Prostate gland (tissue), 2 donors: ENCODE measurements at regions of chr4 and their contacts with region 1.

Region 1: GRCh38 chr4:99324979-99325378 is 3.8 kb upstream of the ADH1B start:
- DNase-seq: peak; percentile 89
- H3K4me3 ChIP-seq: no peak overlapping the region
- H3K27ac ChIP-seq: peak overlapping the region; percentile 65 to 78
- H3K4me1 ChIP-seq: no peaks in the 10 kb centered on the region
- H3K27me3 ChIP-seq: no peaks in the 10 kb centered on the region
- CTCF ChIP-seq: no peak
- POLR2A ChIP-seq: no peak

Region 2: DNA sequence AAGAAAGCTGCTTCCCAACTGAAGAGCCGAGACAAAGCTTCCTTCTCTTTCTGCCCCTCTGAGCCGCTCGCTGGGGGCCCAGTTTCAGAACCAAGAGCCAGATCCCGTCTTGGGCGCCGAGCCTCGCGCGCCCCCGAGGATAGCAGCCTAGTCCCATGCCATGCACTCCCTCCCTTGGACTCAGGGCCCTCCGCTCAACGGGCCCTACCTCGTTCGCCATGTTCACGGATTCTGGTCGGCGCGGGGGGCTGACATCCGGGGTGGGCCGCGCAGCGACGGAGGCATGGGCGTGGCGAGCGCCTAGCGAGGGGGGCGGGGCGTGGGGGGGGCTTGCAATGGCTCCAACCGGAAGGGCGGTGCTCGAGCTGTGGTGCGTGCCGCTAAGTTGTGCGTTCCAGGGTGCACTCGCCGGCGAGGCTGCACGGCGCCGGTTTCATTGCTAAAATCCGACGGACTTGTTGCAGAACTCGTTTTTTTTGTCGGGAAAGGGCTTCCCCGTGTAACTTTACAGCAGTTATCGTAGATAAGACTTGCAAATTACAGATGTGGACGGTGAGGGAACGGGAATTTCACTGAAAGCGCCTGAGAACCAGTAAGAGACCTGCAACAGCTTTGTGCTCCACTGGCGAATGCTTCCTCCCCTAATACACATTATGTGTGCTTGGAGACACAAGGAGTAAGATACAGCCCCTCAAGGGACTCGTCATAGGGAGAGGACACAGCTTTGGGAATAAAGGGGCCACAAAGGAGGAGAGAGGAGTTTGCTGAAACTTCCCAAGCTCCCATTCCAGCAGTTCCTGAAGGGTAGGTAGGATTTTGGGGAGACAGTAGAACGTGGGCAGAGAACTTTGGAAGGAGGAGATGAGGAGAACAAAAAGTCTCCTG is 236.3 kb before region 1 on chr4 and contains the start of gene ADH5:
- intact Hi-C with region 1: loop called (anchors 10 kb)
- DNase-seq: peak; percentile 88
- H3K4me3 ChIP-seq: peak within 1 kb of the TSS; percentile 66 to 79
- H3K27ac ChIP-seq: peak within 1 kb of the TSS; percentile 96
- H3K4me1 ChIP-seq: no peaks in the 10 kb centered on the region
- H3K27me3 ChIP-seq: no peaks in the 10 kb centered on the region
- CTCF ChIP-seq: peak in 1 of 4 experiments; percentile 8
- POLR2A ChIP-seq: peak; percentile 81
- total RNA-seq, gene ADH5: 127 to 149 TPM

Region 3: GRCh38 chr4:99180382-99181070 is 144.5 kb before region 1 on chr4:
- intact Hi-C with region 1: no loop called
- DNase-seq: no peak
- H3K4me3 ChIP-seq: no peak overlapping the region
- H3K27ac ChIP-seq: no peak overlapping the region
- H3K4me1 ChIP-seq: no peaks in the 10 kb centered on the region
- H3K27me3 ChIP-seq: no peaks in the 10 kb centered on the region
- CTCF ChIP-seq: no peak
- POLR2A ChIP-seq: no peak

Region 4: DNA sequence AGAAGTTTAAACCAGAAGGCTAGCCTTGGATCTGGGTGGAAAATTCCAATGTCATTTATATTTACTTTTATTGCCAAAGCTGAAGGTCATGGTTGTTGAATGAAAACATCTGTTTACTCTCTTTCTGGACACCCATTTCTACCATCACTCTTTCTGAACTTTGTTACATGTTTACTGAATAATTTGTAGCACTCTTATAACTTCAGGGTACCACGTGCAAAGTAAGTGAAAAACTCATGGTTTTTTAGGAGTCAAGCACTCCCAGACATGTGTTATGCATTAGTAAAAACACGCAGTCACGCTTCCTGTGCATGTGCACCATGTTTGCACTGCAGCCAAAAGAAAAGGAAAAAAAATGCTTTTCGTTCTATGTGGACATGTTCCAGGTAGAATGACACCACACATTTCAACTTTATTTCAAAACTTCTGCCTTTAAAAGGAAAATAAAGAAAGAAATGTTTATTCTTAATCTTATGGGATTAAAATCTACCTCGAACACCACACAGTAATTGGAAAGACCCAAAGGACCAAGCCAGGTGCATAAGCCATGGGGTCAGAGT is 58.9 kb after region 1 on chr4:
- intact Hi-C with region 1: loop called (anchors 5 kb)
- DNase-seq: no peak
- H3K4me3 ChIP-seq: no peak overlapping the region
- H3K27ac ChIP-seq: peak overlapping the region; percentile 62 to 63
- H3K4me1 ChIP-seq: peaks cover 2% of the 10 kb centered on the region
- H3K27me3 ChIP-seq: no peaks in the 10 kb centered on the region
- CTCF ChIP-seq: no peak
- POLR2A ChIP-seq: no peak